IMR-90 (cell line): ENCODE measurements at regions of chr20 and their contacts with region 1.

Region 1: DNA sequence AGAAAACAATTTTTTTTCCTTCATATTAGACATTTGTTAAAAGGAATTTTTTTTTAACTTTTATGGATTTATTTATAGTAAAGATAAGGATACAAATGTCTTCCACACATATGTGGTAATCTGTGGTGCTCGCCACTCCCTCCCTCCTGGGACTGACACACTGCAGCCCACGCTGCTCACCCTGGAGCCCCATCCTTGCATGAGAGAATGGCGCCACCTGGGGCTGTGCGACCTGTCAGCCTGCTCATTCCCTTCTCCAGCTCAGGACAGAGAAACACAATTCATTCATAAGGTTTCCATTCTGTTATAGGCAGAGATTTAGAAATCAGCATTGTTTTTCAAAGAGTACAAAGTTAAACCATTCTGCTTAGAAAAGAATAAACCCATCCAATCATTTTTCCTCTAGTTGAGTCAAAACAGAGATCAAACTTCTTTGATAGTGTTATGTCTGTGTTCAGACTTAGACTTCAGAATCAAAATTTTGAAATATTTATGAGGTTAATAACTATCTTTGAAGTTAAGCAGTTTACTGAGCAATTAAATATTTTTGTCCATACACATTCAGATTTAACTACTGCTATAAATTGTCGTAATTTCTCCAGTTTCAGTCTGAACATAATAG is 42.8 kb upstream of the DYNLRB1 start:
- DNase-seq: peak; percentile 66
- ATAC-seq: peak; percentile 60
- H3K4me3 ChIP-seq: no peak overlapping the region
- H3K27ac ChIP-seq: no peak overlapping the region
- H3K4me1 ChIP-seq: peaks cover 2% of the 10 kb centered on the region; the same call in 1 of the 2 replicates
- H3K27me3 ChIP-seq: no peaks in the 10 kb centered on the region
- CTCF ChIP-seq: peak; percentile 46
- POLR2A ChIP-seq: no peak
- RAD21 ChIP-seq: peak; percentile 51; the same call in 1 of the 2 replicates

Region 2: GRCh38 chr20:34420146-34420545 is 53.2 kb before region 1 on chr20:
- CTCF ChIA-PET with region 1: no interaction called
- POLR2A ChIA-PET with region 1: no interaction called
- dilution Hi-C with region 1: no loop called
- in situ Hi-C with region 1: no loop called
- intact Hi-C with region 1: loop called (anchors 5 kb)
- DNase-seq: peak; percentile 21
- ATAC-seq: peak; percentile 62
- H3K4me3 ChIP-seq: no peak overlapping the region
- H3K27ac ChIP-seq: no peak overlapping the region
- H3K4me1 ChIP-seq: peaks cover 3% of the 10 kb centered on the region; the same call in 1 of the 2 replicates
- H3K27me3 ChIP-seq: no peaks in the 10 kb centered on the region
- CTCF ChIP-seq: no peak
- POLR2A ChIP-seq: no peak
- RAD21 ChIP-seq: no peak

Region 3: DNA sequence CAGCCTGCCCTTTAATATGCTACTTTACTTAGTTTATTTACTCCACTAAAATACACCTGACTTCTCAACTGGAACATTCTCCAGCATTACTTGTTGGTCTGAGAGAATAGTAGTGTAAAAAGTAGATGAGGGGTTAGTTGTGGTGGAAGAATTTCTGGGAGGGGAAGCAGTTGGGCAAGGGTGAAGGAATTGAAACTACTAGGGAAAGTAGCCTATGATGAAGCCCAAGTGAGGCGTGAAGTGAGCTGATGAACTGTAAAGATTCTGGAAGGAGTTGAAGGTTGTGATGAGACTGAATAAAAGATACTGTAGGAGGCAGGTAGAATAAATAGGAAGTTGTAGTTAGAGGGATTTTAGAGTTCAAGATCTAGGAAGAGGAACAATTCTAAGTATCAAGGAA is 37.8 kb before region 1 on chr20:
- CTCF ChIA-PET with region 1: no interaction called
- POLR2A ChIA-PET with region 1: no interaction called
- dilution Hi-C with region 1: no loop called
- in situ Hi-C with region 1: no loop called
- intact Hi-C with region 1: no loop called
- DNase-seq: no peak
- ATAC-seq: no peak
- H3K4me3 ChIP-seq: no peak overlapping the region
- H3K27ac ChIP-seq: no peak overlapping the region
- H3K4me1 ChIP-seq: peaks cover 3% of the 10 kb centered on the region; the same call in 1 of the 2 replicates
- H3K27me3 ChIP-seq: no peaks in the 10 kb centered on the region
- CTCF ChIP-seq: no peak
- POLR2A ChIP-seq: no peak
- RAD21 ChIP-seq: no peak

Region 4: GRCh38 chr20:34558320-34559218 is 85.2 kb after region 1 on chr20 and contains the start of gene MAP1LC3A:
- CTCF ChIA-PET with region 1: no interaction called
- POLR2A ChIA-PET with region 1: no interaction called
- dilution Hi-C with region 1: no loop called
- in situ Hi-C with region 1: no loop called
- intact Hi-C with region 1: no loop called
- DNase-seq: peak; percentile 95
- ATAC-seq: peak; percentile 92
- H3K4me3 ChIP-seq: peak within 1 kb of the TSS; percentile 76
- H3K27ac ChIP-seq: peak within 1 kb of the TSS; percentile 35
- H3K4me1 ChIP-seq: peaks cover 2% of the 10 kb centered on the region; the same call in 1 of the 2 replicates
- H3K27me3 ChIP-seq: no peaks in the 10 kb centered on the region
- CTCF ChIP-seq: no peak
- POLR2A ChIP-seq: peak; percentile 76
- RAD21 ChIP-seq: no peak
- total RNA-seq, gene MAP1LC3A: 10.0 and 12.5 TPM in 2 replicates